Esophagus muscularis mucosa (tissue), 4 donors: ENCODE measurements at regions of chr7 and their contacts with region 1.

Region 1: DNA sequence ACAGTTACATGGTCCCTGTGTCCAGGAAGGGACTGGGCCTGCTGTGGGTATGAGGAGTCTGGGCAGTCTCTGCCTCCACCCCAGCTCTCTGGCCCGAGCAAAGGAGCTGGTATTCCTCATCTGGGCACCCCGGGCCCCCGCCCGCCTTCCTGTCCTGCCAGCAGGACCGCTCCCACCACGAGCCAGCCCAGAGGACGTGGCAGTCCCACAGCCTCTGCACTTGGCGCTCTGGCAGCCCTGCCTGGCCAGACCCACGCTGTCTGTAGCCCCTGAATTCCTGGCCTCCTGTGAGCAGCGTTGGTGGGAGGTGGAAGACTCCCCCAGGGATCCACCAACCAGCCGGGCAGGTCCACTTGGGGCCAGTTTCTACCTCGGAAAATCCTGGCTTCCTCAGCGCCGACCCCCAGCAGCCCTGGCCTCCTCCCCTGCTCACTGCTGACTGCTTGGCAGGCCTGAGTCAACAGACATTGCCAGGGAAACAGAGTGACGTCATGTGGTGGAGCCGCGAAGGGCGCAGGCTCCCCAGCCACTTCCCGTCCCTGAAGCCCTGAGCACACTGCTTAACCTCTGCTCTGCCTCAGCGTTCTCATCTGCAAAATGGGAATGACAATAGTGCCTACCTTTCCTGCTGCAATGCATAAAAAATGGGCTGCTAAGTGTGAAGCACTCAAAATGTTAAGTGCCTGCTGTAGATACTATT is 21.6 kb upstream of the LIMK1 start:
- DNase-seq: peak; percentile 95
- H3K4me3 ChIP-seq: peak overlapping the region; percentile 14 to 40 (median 30)
- H3K27ac ChIP-seq: peak overlapping the region; percentile 81 to 92 (median 88)
- H3K4me1 ChIP-seq: peaks cover 10 to 39% (median 35%) of the 10 kb centered on the region in 4 donors
- H3K27me3 ChIP-seq: no peaks in the 10 kb centered on the region
- CTCF ChIP-seq: no peak
- EP300 ChIP-seq: no peak
- POLR2A ChIP-seq: no peak

Region 2: DNA sequence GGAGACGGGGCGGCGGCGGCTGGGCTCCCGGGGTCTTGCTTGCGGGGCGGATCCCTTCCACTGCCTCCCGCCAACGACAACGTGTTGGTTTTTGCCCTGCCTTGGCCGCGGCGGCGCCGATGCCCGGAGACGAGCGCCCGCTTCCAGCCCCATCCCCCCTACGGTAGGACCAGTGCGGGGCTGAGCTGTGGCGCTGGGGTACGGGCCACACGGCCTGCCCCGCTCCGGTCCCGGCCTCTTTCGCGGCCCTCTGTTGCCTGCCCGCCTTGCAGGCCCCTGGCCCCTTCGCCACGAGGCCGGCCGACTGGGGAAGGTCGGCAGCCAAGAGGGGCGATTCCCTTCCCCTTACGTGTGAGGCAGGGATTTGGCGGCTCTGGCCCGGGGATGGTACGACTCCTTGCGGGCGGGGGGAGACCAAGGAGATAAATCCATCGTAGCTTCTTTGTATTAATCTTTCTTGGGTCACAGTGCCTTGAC is 112.7 kb after region 1 on chr7:
- intact Hi-C with region 1: loop called (anchors 5 kb)
- DNase-seq: no peak
- H3K4me3 ChIP-seq: peak overlapping the region; percentile 72 to 99 (median 96)
- H3K27ac ChIP-seq: peak overlapping the region; percentile 94 to 99 (median 98)
- H3K4me1 ChIP-seq: peaks cover 51 to 60% (median 57%) of the 10 kb centered on the region in 4 donors
- H3K27me3 ChIP-seq: no peaks in the 10 kb centered on the region
- CTCF ChIP-seq: no peak
- EP300 ChIP-seq: no peak
- POLR2A ChIP-seq: no peak

Region 3: DNA sequence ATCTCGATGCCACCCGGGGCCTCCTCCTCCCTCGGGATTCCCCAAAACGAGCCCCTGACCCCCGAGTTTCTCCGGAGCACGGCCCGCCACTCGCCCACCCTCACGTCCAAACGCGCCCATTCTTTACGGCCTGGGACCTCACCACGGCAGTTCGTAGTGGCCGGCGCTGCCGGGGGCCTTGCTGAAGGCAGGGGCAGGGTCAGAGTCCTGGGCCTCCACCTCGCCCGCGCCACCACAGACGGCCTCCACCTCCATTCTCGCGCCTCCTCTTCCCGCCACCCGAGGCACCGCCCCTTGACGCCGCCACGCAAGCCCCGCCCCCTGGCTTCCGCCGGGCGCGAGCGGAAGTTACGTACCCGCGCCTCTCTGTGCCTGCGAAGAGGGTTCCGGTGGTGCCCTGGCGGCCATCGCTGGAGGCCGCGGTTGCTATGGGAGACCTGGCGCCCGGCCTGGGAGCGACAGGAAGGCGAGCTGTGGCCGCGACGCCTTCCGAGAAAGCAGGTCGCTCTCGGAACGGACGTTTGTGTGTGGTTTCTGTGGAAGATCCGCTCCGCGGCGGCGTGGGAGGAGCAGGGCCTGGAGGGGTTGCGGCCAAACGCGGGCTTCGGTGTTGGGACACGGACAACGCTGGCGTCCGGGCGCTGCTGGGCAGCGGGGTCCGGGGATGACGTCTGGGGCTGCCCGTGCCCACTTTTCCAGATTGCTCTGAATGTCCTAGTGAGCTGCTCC is 192.3 kb after region 1 on chr7 and contains the start of gene RFC2:
- intact Hi-C with region 1: no loop called
- DNase-seq: peak; percentile 99
- H3K4me3 ChIP-seq: peak within 1 kb of the TSS; percentile 69 to 80 (median 72)
- H3K27ac ChIP-seq: peak within 1 kb of the TSS; percentile 85 to 94 (median 92)
- H3K4me1 ChIP-seq: peaks cover 15 to 35% (median 26%) of the 10 kb centered on the region in 4 donors
- H3K27me3 ChIP-seq: no peaks in the 10 kb centered on the region
- CTCF ChIP-seq: peak in 2 of 3 experiments; percentile 40 to 41
- EP300 ChIP-seq: peak; percentile 59
- POLR2A ChIP-seq: peak; percentile 67
- total RNA-seq, gene RFC2: 7.5 to 18.7 (median 14.9) TPM